Naive thymus-derived CD4-positive, alpha-beta T cell (primary cell): ENCODE measurements at regions of chr1 and their contacts with region 1.

Region 1: DNA sequence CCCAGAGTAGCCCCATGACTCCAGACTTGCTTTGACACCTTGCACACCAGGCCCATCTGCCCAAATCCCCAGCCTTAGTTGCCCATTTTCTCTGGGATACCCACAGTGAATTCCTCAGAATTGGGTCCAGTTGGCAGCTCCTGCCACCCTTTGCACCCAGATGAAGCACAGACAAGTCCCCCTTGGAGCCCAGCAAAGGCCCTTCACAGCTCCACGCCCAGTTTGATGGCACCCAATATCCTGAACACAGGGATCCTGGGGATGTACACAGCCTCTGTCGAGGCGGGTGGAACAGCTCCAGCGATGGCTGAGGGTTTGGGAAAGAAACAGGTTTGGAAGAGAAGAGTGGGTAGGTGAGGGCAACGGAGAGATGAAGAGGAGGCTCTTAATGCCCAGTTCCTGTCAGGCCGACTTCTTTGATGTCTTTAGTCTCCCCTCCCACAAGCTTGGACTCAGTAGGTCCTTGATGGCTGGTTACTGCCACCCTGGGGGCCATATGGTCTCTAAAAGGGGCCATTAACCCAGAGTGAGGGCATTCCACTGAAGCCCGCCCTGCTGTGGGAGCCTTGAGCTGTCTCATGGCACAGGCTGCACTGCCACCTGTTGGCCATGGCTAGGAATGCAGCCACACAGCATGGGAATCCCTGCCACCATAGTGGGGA is 21.7 kb downstream of the TMEM53 start:
- DNase-seq: peak; percentile 38 to 78 (median 63)
- ATAC-seq: peak; percentile 96
- H3K4me3 ChIP-seq: no peak overlapping the region
- H3K4me3 Mint-ChIP-seq: no peak overlapping the region
- H3K27ac ChIP-seq: peak overlapping the region; percentile 45
- H3K27ac Mint-ChIP-seq: peak overlapping the region in 7 of 9 donors; percentile 8 to 75 (median 68)
- H3K4me1 ChIP-seq: no peaks in the 10 kb centered on the region
- H3K4me1 Mint-ChIP-seq: peaks cover 0 to 5% (median 0%) of the 10 kb centered on the region in 7 donors
- H3K27me3 ChIP-seq: no peaks in the 10 kb centered on the region
- H3K27me3 Mint-ChIP-seq: no peaks in the 10 kb centered on the region

Region 2: DNA sequence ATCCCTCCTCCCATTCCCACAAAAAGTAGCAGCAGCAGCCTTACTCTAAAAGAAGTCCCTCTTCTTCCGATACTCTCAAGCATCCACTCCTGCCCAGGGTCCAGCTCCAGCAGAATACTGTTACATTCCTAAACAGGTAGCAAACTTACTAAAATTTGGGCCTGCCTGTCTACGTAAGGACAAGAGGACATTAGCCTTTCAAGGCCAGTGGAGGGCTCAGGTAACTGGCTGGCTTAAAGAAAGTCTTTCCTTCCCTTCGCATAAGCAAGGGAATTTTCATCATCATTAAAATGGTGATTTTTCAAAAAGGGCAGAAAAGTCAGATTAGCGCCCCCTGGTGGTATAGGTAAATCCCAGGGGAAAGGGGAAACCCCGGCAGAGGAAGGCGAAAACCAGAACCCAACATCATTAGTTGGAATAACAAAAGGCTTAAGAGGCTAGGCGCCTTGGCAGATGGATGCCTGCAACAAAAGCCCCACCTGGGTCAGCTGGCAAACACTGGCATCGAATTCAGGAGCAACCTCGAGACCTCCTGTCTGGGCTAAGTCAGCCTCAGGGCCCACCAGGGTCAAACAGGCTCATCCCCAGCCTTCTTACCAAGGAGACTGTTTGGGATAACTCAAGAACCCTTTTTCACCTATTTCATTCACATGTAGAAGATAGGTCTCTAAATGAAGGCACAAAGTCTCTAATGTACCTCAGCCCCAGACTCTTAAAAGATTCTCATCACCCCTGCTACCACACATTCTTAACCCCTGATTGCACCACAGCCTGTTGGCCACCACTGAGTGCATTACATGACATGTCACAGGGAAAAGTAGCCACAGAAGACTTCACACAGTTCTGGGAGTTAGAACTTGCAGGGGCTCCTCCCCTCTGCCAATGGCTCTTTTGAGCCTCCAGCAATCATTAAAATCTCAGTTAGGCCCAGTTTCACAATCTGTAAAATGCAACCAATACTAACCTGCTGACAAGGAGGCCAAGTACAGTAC is 334.2 kb before region 1 on chr1:
- CTCF ChIA-PET with region 1: no interaction called
- POLR2A ChIA-PET with region 1: no interaction called
- intact Hi-C with region 1: loop called in 1 of 2 experiments (anchors 1 kb)
- DNase-seq: peak; percentile 14 to 61 (median 48)
- ATAC-seq: peak; percentile 75
- H3K4me3 ChIP-seq: no peak overlapping the region
- H3K4me3 Mint-ChIP-seq: no peak overlapping the region
- H3K27ac ChIP-seq: no peak overlapping the region
- H3K27ac Mint-ChIP-seq: peak overlapping the region in 3 of 9 donors; percentile 18 to 33 (median 28)
- H3K4me1 ChIP-seq: no peaks in the 10 kb centered on the region
- H3K4me1 Mint-ChIP-seq: peaks cover 0 to 30% (median 4%) of the 10 kb centered on the region in 7 donors
- H3K27me3 ChIP-seq: no peaks in the 10 kb centered on the region
- H3K27me3 Mint-ChIP-seq: no peaks in the 10 kb centered on the region

Region 3: GRCh38 chr1:44500181-44501046 is 152.2 kb before region 1 on chr1:
- CTCF ChIA-PET with region 1: no interaction called
- POLR2A ChIA-PET with region 1: no interaction called
- intact Hi-C with region 1: no loop called
- DNase-seq: no peak
- ATAC-seq: no peak
- H3K4me3 ChIP-seq: no peak overlapping the region
- H3K4me3 Mint-ChIP-seq: no peak overlapping the region
- H3K27ac ChIP-seq: no peak overlapping the region
- H3K27ac Mint-ChIP-seq: no peak overlapping the region
- H3K4me1 ChIP-seq: no peaks in the 10 kb centered on the region
- H3K4me1 Mint-ChIP-seq: peaks cover 0 to 2% (median 0%) of the 10 kb centered on the region in 7 donors
- H3K27me3 ChIP-seq: no peaks in the 10 kb centered on the region
- H3K27me3 Mint-ChIP-seq: peaks cover 0 to 5% (median 5%) of the 10 kb centered on the region in 5 donors

Region 4: GRCh38 chr1:44566281-44567046 is 86.1 kb before region 1 on chr1:
- CTCF ChIA-PET with region 1: interaction called, 65 read pairs
- POLR2A ChIA-PET with region 1: no interaction called
- intact Hi-C with region 1: no loop called
- DNase-seq: no peak
- ATAC-seq: no peak
- H3K4me3 ChIP-seq: no peak overlapping the region
- H3K4me3 Mint-ChIP-seq: no peak overlapping the region
- H3K27ac ChIP-seq: no peak overlapping the region
- H3K27ac Mint-ChIP-seq: no peak overlapping the region
- H3K4me1 ChIP-seq: no peaks in the 10 kb centered on the region
- H3K4me1 Mint-ChIP-seq: no peaks in the 10 kb centered on the region
- H3K27me3 ChIP-seq: no peaks in the 10 kb centered on the region
- H3K27me3 Mint-ChIP-seq: peaks cover 0 to 22% (median 0%) of the 10 kb centered on the region in 5 donors

Region 5: DNA sequence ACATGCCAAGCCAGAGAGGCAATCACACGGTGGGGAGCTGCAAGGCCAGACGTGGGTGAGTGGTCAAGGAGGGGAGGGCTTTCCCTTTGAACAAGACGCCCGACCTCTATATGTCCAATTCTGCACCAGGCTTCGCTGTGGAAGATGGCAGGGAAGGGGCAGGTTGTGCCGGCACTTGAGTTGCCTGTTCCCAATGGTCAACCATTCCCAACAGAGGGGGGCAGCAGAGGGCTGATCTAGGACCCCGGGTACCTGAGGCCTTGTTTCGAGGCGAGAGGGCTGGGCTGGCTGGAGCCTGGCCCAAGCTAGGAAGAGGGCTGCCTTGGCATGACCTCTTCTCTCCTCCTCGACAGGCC is 43.2 kb before region 1 on chr1:
- CTCF ChIA-PET with region 1: interaction called, 22 read pairs
- POLR2A ChIA-PET with region 1: no interaction called
- intact Hi-C with region 1: loop called (anchors 1 kb)
- DNase-seq: peak in 3 of 9 donors; percentile 15 to 26 (median 21)
- ATAC-seq: no peak
- H3K4me3 ChIP-seq: no peak overlapping the region
- H3K4me3 Mint-ChIP-seq: no peak overlapping the region
- H3K27ac ChIP-seq: no peak overlapping the region
- H3K27ac Mint-ChIP-seq: no peak overlapping the region
- H3K4me1 ChIP-seq: no peaks in the 10 kb centered on the region
- H3K4me1 Mint-ChIP-seq: no peaks in the 10 kb centered on the region
- H3K27me3 ChIP-seq: no peaks in the 10 kb centered on the region
- H3K27me3 Mint-ChIP-seq: peaks cover 0 to 7% (median 4%) of the 10 kb centered on the region in 5 donors

Region 6: DNA sequence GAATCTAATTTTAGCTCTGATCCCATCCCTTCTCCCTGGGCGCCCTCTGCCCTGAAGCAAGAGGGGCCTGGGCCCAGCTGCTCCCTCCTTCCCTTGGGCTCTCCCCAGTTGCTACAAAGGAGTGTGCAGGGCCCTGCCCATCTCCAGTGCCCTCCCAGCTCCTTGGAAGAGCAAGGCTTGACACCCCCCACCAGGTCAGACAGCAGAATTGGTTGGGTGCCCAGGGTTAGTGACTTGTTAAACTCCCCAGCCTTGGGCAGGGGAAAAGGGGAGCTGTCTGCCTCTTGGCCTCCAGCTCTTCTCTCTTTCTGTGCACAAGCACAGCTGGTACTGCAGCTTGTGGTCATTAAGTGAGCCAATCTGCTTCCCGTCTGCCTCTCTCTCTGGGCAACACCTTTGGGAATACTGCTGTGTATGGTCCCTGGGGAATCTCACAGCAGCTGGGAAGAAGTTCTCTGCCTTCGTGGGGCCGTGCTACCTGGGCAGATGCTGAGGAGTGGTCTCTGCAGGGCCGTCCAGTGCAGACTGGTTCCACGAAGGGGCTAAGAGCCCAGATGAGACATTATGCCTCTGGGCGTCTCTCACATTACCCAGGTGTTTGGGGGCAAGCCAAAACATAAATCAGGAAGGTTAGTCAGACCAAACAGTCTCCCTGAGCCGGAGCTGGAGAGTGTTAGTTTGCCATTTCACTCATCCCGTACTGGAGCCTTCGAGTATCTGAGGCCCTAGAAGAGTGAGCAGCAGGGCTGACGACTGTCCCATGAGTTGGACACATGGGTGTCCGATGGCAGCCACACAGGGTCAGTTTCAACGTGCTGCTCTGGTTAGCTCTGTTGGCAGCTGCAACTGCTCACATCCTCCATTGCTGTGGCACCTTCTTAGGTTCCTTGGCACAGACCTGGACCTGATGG is 15.6 kb before region 1 on chr1:
- CTCF ChIA-PET with region 1: interaction called, 19 read pairs
- POLR2A ChIA-PET with region 1: interaction called, 14 read pairs
- intact Hi-C with region 1: loop called in 1 of 2 experiments (anchors 1 kb)
- DNase-seq: no peak
- ATAC-seq: no peak
- H3K4me3 ChIP-seq: no peak overlapping the region
- H3K4me3 Mint-ChIP-seq: no peak overlapping the region
- H3K27ac ChIP-seq: no peak overlapping the region
- H3K27ac Mint-ChIP-seq: peak overlapping the region in 3 of 9 donors; percentile 9 to 48 (median 12)
- H3K4me1 ChIP-seq: peaks cover 8% of the 10 kb centered on the region in 2 donors
- H3K4me1 Mint-ChIP-seq: peaks cover 25 to 46% (median 33%) of the 10 kb centered on the region in 7 donors
- H3K27me3 ChIP-seq: no peaks in the 10 kb centered on the region
- H3K27me3 Mint-ChIP-seq: no peaks in the 10 kb centered on the region

Region 7: DNA sequence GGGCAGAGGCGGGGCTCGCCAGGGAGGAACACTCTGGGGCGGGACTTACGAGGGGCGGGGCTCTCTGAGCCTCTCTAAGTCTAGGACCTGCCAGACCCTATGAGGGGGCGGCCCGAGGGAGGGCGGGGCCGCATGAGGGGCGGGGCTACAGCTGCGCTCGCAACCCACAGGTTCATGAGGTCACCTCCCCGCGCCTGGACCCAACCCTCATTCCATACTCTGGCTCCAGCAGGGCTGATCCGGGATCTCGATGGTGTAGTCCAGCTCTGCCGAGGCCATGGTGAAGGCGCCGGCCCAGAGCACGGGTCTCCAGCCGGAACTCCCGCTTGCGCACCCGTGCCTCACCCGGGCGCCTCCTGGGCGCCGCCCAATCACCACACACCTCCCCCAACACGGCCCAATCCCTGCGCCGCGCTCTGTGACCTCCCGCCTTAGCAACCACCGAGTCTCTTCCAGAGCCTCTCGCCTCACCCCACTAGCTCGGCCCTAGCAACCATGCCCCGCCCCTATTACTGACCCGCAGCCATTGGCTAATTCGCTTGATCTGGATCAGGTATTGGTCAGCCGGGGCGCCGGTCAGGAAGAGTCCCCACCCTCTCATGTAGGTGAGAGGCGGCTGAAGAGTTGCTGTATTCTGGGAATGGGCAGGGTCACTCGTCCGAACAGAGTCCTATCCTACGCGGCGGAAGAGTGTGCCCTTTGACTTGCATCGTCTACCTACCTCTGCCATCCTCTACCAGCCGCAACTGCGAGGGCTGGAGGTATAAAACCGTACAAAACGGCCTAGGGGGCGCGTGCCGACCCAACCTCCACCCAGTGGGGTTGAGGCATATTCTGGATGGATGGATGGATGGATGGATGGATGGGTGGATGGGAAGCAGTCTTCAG is 21.8 kb after region 1 on chr1 and contains the starts of genes ARMH1 and TMEM53:
- CTCF ChIA-PET with region 1: interaction called, 10 read pairs
- POLR2A ChIA-PET with region 1: no interaction called
- intact Hi-C with region 1: loop called in 1 of 2 experiments (anchors 2 kb)
- DNase-seq: peak; percentile 91 to 96 (median 95)
- ATAC-seq: peak; percentile 94
- H3K4me3 ChIP-seq: peak within 1 kb of the TSS; percentile 81
- H3K4me3 Mint-ChIP-seq: peak within 1 kb of the TSS; percentile 83 to 94 (median 91)
- H3K27ac ChIP-seq: peak within 1 kb of the TSS; percentile 76
- H3K27ac Mint-ChIP-seq: peak within 1 kb of the TSS; percentile 84 to 94 (median 91)
- H3K4me1 ChIP-seq: peaks cover 0 to 6% of the 10 kb centered on the region in 2 donors
- H3K4me1 Mint-ChIP-seq: peaks cover 13 to 34% (median 23%) of the 10 kb centered on the region in 7 donors
- H3K27me3 ChIP-seq: no peaks in the 10 kb centered on the region
- H3K27me3 Mint-ChIP-seq: no peaks in the 10 kb centered on the region
- total RNA-seq, gene ARMH1: 65.8 to 205 (median 87.0) TPM
- total RNA-seq, gene TMEM53: 1.6 to 3.5 (median 1.9) TPM

Region 8: DNA sequence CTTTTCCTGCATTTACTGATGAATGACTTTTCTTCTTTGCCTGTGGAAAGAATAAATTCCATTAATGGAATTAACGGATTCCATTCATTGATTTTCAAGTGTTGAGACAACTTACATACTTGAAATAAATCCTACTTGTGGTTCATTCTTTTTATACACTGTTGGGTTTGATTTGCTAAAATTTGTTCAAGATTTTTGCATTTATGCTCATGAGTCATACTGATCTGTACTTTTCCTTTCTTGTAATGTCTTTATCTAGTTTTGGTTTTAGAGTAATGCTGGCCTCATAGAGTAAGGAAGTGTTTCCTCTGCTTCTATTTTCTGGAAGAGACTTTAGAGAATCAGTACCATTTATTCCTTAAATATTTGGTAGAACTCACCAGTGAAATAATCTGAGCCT is 373.9 kb after region 1 on chr1:
- CTCF ChIA-PET with region 1: no interaction called
- POLR2A ChIA-PET with region 1: no interaction called
- intact Hi-C with region 1: no loop called
- DNase-seq: no peak
- ATAC-seq: no peak
- H3K4me3 ChIP-seq: no peak overlapping the region
- H3K4me3 Mint-ChIP-seq: no peak overlapping the region
- H3K27ac ChIP-seq: no peak overlapping the region
- H3K27ac Mint-ChIP-seq: no peak overlapping the region
- H3K4me1 ChIP-seq: no peaks in the 10 kb centered on the region
- H3K4me1 Mint-ChIP-seq: peaks cover 0 to 15% (median 0%) of the 10 kb centered on the region in 7 donors
- H3K27me3 ChIP-seq: no peaks in the 10 kb centered on the region
- H3K27me3 Mint-ChIP-seq: peaks cover 0 to 5% (median 0%) of the 10 kb centered on the region in 5 donors